ENCODE measurements at regions of chr11 and their contacts with region 1.

Region 1: GRCh38 chr11:85664615-85665481 is at the start of gene CREBZF:
- DNase-seq: peak; percentile 94
- ATAC-seq: peak; percentile 67
- H3K4me3 Mint-ChIP-seq: peak within 1 kb of the TSS; percentile 98
- H3K27ac Mint-ChIP-seq: peak within 1 kb of the TSS; percentile 96
- H3K4me1 Mint-ChIP-seq: peaks cover 31% of the 10 kb centered on the region
- H3K27me3 Mint-ChIP-seq: no peaks in the 10 kb centered on the region
- total RNA-seq, gene CREBZF: 51.4 to 54.8 TPM

Region 2: DNA sequence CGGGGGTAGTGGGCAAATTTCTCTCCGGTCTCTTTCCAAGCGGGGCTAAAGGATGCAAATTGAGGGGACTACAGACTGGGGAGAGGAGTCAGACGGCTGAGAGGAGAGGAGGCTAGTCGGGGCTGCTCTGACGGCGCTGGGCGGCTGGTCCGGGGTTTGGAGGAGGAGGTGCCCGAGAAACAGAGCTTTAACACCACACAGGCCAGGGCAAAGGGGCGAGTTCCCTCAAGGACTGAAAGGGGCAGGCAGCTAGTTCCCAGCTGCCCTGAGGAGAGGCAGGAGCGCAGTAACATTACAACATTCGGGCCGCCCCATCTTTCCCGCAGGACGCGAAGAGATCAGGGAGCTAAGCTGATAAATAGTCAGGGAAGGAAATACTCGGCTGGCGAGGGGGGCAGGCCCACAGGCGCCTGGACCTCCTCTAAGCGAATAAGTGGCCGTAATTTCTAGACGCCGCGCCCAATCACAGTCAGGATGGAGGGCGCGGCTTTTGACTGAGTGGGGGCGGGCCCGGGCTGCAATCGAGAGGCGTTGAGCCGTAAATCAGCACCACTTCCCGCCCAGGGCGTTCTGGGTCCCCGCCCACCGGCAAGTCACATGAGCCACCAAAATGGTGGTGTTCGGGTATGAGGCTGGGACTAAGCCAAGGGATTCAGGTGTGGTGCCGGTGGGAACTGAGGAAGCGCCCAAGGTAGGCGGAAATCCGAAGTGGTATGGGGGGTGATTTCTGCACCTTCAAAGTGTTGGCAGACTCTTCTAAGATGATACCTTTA is 36.7 kb before region 1 on chr11 and contains the start of gene TMEM126B:
- CTCF ChIA-PET with region 1: no interaction called
- POLR2A ChIA-PET with region 1: interaction called, 32 read pairs
- DNase-seq: peak; percentile 99
- ATAC-seq: peak; percentile 99
- H3K4me3 Mint-ChIP-seq: peak within 1 kb of the TSS; percentile 99
- H3K27ac Mint-ChIP-seq: peak within 1 kb of the TSS; percentile 91
- H3K4me1 Mint-ChIP-seq: peaks cover 40% of the 10 kb centered on the region
- H3K27me3 Mint-ChIP-seq: peaks cover 4% of the 10 kb centered on the region
- total RNA-seq, gene TMEM126B: 51.4 to 57.8 TPM

Region 3: DNA sequence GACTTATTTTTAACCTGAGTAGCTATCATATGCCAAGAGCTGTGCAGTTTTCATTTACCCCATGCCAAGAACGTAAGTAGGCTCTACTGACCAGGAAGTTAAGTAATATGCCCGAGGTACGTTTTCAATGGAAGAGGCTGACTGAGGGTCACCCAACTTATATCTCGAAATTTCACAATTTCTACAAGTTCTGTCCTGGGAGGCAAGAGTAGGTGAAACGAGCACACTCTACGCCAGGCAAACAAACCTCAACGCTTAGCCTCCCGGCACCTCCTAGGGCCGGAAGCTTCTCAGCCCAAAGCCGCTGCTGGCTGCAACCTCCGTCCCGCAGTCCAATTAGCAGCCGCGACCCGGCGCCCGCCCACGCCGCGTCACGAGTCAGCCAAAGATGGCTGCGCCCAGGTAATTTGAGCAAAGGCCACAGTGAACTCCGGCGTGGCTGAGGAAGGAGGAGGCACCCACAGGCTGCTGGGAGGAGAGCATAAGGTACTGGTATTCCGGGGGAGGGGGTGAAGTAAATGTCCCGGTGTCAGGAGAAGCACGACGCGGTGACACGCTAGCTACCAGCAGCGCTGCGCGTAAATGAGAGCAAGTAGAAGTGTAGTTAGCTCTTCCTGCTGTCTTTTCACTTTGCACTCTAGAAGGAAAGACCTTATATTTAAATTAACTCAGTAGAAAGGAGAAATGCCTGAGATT is 17.1 kb before region 1 on chr11 and contains the start of gene TMEM126A:
- CTCF ChIA-PET with region 1: interaction called, 26 read pairs
- POLR2A ChIA-PET with region 1: interaction called, 41 read pairs
- DNase-seq: peak; percentile 94
- ATAC-seq: peak; percentile 99
- H3K4me3 Mint-ChIP-seq: peak within 1 kb of the TSS; percentile 88
- H3K27ac Mint-ChIP-seq: peak within 1 kb of the TSS; percentile 95
- H3K4me1 Mint-ChIP-seq: peaks cover 35% of the 10 kb centered on the region
- H3K27me3 Mint-ChIP-seq: peaks cover 21% of the 10 kb centered on the region
- total RNA-seq, gene TMEM126A: 33.7 to 39.8 TPM

Region 4: GRCh38 chr11:85652786-85653447 is 11.9 kb before region 1 on chr11:
- CTCF ChIA-PET with region 1: interaction called, 26 read pairs
- POLR2A ChIA-PET with region 1: interaction called, 41 read pairs
- DNase-seq: no peak
- ATAC-seq: no peak
- H3K4me3 Mint-ChIP-seq: no peak overlapping the region
- H3K27ac Mint-ChIP-seq: peak overlapping the region; percentile 44
- H3K4me1 Mint-ChIP-seq: peaks cover 55% of the 10 kb centered on the region
- H3K27me3 Mint-ChIP-seq: no peaks in the 10 kb centered on the region

Region 5: DNA sequence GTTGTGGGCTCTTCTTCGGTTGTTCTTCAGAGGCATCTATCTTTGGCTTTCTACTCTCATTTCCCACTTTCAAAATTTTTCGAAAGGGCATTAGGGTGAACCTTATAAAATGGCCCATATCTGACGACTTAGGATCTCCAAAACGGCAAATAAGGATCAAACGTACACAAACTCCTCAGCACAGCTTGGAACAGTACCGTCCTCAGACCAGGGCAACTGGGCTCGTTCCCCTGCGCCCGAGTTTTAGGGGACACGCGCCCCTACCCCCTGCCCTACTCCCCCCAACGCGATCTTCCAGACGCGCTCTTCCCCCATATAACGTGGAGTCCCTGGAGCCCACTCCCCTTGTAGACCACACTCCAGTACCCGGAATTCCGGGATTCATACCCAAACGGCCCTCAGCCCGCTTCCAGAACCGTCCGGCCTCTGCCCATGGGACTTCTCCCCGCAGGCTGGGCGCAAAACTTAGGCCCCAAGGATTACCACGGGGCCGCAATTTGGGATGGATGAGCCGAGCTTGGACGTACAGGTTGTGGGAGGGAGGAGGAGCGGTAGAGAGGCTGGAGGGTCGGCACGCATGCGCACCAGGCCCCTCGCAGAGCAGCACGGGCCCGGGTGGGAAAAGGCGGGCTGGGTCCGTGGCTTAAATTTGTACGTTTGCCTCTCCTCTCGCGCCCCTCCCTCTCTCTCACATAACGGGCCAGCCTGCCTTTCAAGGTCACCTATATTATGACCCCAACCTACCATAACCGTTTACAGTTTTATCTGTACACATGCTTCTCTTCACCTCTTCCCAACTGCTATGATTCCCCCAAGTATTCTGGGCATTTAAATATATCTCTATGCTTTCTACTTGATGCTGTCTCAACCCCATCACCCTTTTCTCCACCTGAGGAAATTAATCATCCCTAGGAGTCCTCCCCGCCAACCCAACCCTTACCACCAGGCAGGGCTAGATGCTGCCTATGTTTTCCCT is 17.8 kb after region 1 on chr11:
- CTCF ChIA-PET with region 1: interaction called, 5 read pairs
- POLR2A ChIA-PET with region 1: interaction called, 12 read pairs
- DNase-seq: peak; percentile 72
- ATAC-seq: peak; percentile 93
- H3K4me3 Mint-ChIP-seq: peak overlapping the region; percentile 74
- H3K27ac Mint-ChIP-seq: peak overlapping the region; percentile 78
- H3K4me1 Mint-ChIP-seq: peaks cover 19% of the 10 kb centered on the region
- H3K27me3 Mint-ChIP-seq: peaks cover 13% of the 10 kb centered on the region

Region 6: DNA sequence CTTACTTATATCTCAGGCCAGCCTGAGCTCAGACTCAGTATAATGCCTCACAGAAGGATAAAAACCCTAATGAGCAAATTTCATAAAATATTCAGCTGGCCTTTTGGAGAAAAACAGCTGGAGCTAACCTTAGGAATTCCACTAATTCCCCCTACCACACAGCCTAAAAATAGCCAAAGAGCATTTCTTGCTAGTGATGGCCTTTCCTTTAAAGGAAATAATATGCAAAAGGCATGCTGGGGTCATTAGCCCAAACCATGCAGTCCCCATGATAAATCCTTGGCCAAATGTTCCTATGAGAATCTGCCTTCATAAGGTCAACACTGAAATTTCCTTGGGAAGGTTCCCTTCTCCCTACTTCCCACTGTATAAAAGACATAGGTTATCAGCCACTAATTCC is 107.8 kb after region 1 on chr11:
- CTCF ChIA-PET with region 1: no interaction called
- POLR2A ChIA-PET with region 1: no interaction called
- DNase-seq: no peak
- ATAC-seq: no peak
- H3K4me3 Mint-ChIP-seq: no peak overlapping the region
- H3K27ac Mint-ChIP-seq: no peak overlapping the region
- H3K4me1 Mint-ChIP-seq: peaks cover 25% of the 10 kb centered on the region
- H3K27me3 Mint-ChIP-seq: no peaks in the 10 kb centered on the region